RWPE1 (cell line): ENCODE measurements at regions of chr11 and their contacts with region 1.

Region 1: DNA sequence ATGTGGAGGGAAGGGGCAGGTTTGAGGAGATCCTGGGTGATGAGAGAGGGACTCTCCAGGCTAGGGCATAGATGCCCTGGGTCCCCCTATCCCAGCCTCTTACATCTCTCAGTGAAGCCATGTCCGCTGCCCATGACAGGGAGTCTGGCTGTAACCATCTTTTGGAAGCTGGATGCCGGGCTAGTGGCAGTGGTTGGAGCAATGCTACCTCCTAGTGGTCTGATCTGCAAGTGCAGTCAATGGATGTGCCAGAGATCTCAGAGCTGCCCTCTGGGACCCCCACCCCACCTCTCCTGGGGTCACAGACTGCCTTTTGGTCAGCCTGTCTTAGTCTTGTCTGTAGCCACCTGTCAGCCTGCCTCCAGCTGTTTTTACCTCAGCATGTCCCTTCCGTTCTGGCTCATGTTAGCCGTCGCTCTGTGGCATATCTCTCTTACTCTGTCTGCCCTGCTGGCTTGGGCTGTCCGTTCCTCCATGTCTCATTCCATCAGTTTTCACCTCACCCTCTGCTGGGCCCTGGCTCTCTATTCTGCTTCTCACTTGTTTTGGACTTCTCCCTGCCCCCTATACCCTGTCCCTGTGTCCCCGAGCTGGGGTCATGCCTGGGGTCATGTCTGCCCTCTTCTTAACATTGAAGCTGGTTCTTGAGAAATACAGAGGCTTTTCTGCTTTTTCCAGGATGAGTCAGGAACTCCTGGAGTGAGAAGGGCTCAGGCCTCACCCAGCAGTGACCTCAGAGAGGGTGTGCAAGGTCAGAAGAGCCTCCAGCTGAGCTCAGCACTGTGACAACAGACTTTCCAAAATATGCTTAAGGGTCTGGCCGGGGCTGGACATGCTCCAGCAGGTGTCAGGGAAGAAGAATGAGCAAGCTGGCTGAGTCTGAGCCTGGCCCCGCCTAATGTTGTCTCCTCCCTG is 52.0 kb upstream of the THY1 start:
- DNase-seq: peak; percentile 57
- H3K27ac ChIP-seq: peak overlapping the region; percentile 80
- CTCF ChIP-seq: peak; percentile 82

Region 2: GRCh38 chr11:119101759-119102423 is 373.0 kb before region 1 on chr11 and contains the start of gene DPAGT1:
- CTCF ChIA-PET with region 1: no interaction called
- POLR2A ChIA-PET with region 1: interaction called, 10 read pairs
- DNase-seq: peak; percentile 92
- H3K27ac ChIP-seq: peak within 1 kb of the TSS; percentile 97
- CTCF ChIP-seq: no peak

Region 3: DNA sequence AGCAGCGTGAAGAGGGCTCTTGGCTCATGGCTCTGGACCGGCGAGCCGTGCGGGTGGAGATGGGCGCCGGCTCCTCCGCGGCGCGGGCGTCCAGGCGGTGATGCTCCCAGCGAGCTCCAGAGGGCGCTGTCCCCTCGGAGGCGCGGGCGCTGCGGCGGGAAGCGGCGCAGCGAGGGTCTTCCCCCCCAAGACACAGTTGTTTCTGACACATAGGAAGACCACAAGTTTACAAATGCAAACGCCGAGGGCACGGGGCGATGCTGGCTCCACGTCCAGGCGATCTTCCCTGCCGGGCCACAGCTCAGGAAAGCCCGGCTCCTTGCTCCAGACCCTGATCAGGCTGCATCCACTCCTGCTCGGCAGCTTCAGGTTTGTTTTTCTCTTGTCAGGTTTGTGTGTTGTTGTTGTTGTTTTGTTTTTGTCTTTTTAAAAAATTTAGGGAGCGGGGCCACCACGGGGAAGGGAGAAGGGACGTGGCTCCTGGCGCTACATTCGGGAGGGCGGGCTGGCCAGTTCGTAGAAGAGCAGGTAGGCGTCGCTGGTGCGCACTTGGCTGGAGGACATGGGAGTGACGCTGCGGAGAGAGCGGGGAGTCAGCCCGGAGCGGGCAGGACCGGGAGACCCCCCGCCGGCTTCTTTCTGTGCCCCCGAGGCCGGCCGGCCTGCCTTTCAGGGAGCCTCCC is 118.4 kb before region 1 on chr11:
- CTCF ChIA-PET with region 1: interaction called, 24 read pairs
- POLR2A ChIA-PET with region 1: no interaction called
- DNase-seq: no peak
- H3K27ac ChIP-seq: peak overlapping the region; percentile 75
- CTCF ChIP-seq: peak; percentile 96

Region 4: GRCh38 chr11:119445850-119446249 is 29.1 kb before region 1 on chr11:
- CTCF ChIA-PET with region 1: no interaction called
- POLR2A ChIA-PET with region 1: no interaction called
- DNase-seq: no peak
- H3K27ac ChIP-seq: no peak overlapping the region
- CTCF ChIP-seq: no peak